Dorsolateral prefrontal cortex (tissue), 120 donors: ENCODE measurements at regions of chr9 and their contacts with region 1.

Region 1: GRCh38 chr9:21326526-21327139 is 8.6 kb downstream of the KLHL9 start:
- DNase-seq: no peak
- H3K4me3 ChIP-seq: peak overlapping the region in 1 of 59 donors; percentile 10
- H3K27ac ChIP-seq: no peak overlapping the region
- H3K27me3 ChIP-seq: no peaks in the 10 kb centered on the region
- CTCF ChIP-seq: peak; percentile 52 to 94 (median 74)

Region 2: GRCh38 chr9:21286659-21287058 is 40.0 kb before region 1 on chr9:
- intact Hi-C with region 1: no loop called
- DNase-seq: no peak
- H3K4me3 ChIP-seq: no peak overlapping the region
- H3K27ac ChIP-seq: no peak overlapping the region
- H3K27me3 ChIP-seq: peaks cover 0 to 8% (median 0%) of the 10 kb centered on the region in 45 donors
- CTCF ChIP-seq: no peak

Region 3: DNA sequence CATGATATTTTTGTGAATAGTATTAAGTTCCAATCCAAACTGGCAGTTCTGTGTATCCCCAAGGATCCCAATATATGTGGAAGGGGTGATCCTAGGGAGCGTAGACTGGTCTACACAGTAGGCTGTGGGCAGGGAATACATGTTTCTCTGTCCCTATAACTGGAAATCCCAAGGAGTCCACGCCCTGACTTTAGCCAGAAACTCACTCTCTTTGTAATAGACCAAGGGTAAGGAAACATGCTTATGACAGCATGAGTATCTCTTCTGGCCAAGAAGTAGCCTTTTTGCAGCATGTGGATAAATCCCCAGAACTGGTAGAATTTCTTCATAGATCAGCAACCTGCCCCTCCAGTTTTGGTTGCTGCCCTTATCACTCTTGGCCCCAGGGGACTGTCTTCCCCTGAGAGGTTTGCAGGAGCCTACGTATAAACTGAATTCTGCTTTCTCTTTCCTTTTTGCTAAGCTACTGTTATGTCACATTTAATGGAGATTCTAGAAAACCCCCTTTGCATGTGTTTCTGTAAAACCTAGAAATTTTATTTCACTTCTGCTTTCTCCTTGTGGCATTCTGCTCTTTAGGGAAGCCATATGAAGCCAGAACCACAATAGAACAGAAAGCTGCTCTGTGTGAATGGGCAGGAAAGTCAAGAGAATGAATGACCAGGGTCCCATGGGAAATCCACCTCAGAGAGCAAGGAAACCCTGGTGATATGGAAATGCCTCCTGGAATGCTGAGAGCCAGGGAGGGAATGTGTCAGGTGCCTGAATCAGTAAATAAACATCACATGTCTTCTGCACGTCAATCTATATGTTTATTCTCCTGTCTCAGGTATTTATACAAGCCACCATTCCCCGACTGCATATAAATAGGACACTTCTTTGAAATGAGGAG is 55.1 kb after region 1 on chr9:
- intact Hi-C with region 1: no loop called
- DNase-seq: no peak
- H3K4me3 ChIP-seq: no peak overlapping the region
- H3K27ac ChIP-seq: no peak overlapping the region
- H3K27me3 ChIP-seq: peaks cover 0 to 8% (median 0%) of the 10 kb centered on the region in 45 donors
- CTCF ChIP-seq: no peak

Region 4: DNA sequence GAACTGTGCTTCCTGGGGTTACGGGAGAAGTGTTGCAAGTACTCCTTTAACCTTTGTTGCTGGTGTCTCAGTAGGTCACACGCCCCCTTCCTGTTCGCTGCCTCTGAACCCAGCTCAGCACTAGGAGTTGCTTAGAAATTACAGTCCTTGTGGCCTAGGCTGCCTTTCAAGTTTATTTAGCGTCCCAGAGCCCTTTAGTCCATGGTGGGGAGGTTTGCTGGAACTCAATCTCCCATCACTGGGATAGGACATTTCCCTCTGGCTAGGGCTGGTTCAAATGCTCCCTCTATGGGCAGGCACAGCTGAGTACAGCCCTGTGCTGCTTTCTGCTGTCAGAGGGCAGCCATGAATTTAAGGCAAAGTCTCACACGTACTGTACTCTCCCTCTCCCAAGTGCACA is 87.0 kb after region 1 on chr9:
- intact Hi-C with region 1: loop called in 1 of 2 experiments (anchors 5 kb)
- DNase-seq: peak in 3 of 10 donors; percentile 29 to 56 (median 31)
- H3K4me3 ChIP-seq: no peak overlapping the region
- H3K27ac ChIP-seq: no peak overlapping the region
- H3K27me3 ChIP-seq: no peaks in the 10 kb centered on the region
- CTCF ChIP-seq: peak in 49 of 56 donors; percentile 11 to 66 (median 46)

Region 5: DNA sequence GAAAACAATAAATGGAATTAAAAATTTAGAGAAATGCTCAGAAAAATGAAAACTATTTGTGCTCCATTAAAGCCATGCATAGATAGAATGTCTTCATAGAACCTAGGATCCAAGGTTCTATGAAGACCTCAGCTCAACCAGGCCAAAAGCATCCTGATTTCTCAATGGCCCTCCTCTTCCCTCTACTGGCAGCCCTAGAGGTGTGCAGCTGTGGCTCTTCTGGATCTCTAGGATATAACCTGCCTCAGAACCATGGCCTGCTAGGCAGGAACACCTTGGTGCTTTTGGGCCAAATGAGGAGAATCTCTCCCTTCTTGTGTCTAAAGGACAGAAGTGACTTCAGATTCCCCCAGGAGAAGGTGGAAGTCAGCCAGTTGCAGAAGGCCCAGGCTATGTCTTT is 128.7 kb after region 1 on chr9:
- intact Hi-C with region 1: loop called (anchors 2 to 10 kb)
- DNase-seq: peak in 3 of 10 donors; percentile 5 to 42 (median 8)
- H3K4me3 ChIP-seq: no peak overlapping the region
- H3K27ac ChIP-seq: no peak overlapping the region
- H3K27me3 ChIP-seq: no peaks in the 10 kb centered on the region
- CTCF ChIP-seq: peak in 55 of 56 donors; percentile 8 to 81 (median 62)

Region 6: GRCh38 chr9:21616082-21616778 is 289.6 kb after region 1 on chr9:
- intact Hi-C with region 1: no loop called
- DNase-seq: no peak
- H3K4me3 ChIP-seq: no peak overlapping the region
- H3K27ac ChIP-seq: no peak overlapping the region
- H3K27me3 ChIP-seq: peaks cover 0 to 10% (median 0%) of the 10 kb centered on the region in 45 donors
- CTCF ChIP-seq: no peak

Region 7: DNA sequence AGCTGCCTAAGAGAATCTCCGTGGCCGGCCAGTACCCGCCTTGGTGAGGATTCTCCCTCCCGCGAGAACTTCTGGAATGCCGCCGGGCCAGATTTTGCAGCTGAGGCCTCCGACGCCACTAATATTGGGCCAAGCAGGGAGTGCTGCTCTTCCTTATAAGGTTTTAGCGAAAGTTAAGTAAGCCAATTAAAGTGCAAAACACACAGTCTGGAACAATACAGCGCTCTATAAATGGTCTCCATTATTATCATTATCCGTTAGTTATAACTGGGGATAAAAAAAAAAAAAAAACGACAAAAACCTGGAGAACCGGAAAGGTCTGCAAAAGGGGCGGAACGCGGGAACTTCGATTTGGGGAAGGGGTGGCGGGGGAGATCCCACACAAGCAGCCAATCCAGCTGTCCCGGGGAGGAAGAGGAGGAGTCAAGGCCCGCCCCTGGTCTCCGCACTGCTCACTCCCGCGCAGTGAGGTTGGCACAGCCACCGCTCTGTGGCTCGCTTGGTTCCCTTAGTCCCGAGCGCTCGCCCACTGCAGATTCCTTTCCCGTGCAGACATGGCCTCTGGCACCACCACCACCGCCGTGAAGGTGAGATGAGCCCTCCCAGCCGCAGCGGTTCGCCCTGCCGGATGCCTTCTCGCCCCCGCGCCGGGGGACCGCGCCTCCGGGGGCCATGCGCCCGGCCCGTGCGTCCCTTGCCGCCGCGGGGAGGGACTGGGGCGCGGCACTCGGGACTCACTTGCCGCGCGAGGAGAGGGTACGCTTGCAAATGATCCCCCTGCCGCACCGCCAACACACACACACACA is 475.8 kb after region 1 on chr9 and contains the start of gene MTAP:
- intact Hi-C with region 1: loop called in 1 of 2 experiments (anchors 5 kb)
- DNase-seq: peak; percentile 76 to 95 (median 92)
- H3K4me3 ChIP-seq: peak within 1 kb of the TSS; percentile 56 to 94 (median 82)
- H3K27ac ChIP-seq: peak within 1 kb of the TSS; percentile 57 to 96 (median 91)
- H3K27me3 ChIP-seq: no peaks in the 10 kb centered on the region
- CTCF ChIP-seq: peak in 13 of 56 donors; percentile 4 to 43 (median 21)
- total RNA-seq, gene MTAP: 15.1 to 48.5 (median 26.3) TPM